HEK293 (cell line): ENCODE measurements at regions of chr17 and their contacts with region 1.

Region 1: GRCh38 chr17:7687908-7688807 is at the start of gene WRAP53:
- H3K4me3 ChIP-seq: peak within 1 kb of the TSS; percentile 93
- H3K27ac ChIP-seq: peak within 1 kb of the TSS; percentile 96
- H3K4me1 ChIP-seq: peaks cover 13% of the 10 kb centered on the region
- CTCF ChIP-seq: peak; percentile 99

Region 2: DNA sequence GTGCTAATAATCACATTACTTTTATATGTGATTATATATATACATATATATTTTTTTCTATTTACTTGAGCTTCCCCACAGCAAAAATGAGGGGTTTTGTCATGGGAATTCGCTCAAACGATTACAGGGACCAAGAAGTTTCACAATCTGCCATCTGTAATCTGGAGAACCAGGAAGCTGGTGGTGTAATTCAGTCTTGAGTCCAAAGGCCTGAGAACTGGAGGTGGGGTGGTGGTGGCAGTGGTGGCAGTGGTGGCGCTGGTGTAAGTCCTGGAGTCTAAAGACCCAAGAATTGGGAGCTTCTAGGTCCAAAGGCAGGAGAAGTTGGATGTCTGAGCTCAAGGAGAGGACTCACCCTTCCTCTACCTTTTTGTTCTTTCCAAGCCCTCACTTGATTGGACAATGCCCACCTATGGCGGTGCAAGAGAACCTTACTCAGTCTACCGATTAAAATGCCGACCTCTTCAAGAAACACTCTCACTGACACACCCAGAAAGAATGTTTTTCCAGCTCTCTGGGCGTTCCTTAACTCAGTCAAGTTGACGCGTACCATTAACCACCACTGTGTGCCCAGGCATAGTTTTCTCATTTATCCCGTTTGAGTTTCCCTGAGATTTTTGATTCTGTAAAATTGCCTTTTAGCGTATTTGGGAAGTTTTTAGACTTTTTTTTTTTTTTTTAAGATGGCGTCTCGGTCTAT is 172.1 kb before region 1 on chr17:
- CTCF ChIA-PET with region 1: interaction called, 12 read pairs
- POLR2A ChIA-PET with region 1: no interaction called
- H3K4me3 ChIP-seq: no peak overlapping the region
- H3K27ac ChIP-seq: no peak overlapping the region
- H3K4me1 ChIP-seq: no peaks in the 10 kb centered on the region
- CTCF ChIP-seq: no peak

Region 3: GRCh38 chr17:7589204-7589868 is 98.8 kb before region 1 on chr17:
- CTCF ChIA-PET with region 1: interaction called, 18 read pairs
- POLR2A ChIA-PET with region 1: interaction called, 93 read pairs
- H3K4me3 ChIP-seq: no peak overlapping the region
- H3K27ac ChIP-seq: no peak overlapping the region
- H3K4me1 ChIP-seq: no peaks in the 10 kb centered on the region; the same call in 1 of the 2 replicates
- CTCF ChIP-seq: no peak; the same call in 1 of the 2 replicates

Region 4: GRCh38 chr17:7640783-7641182 is 47.4 kb before region 1 on chr17:
- CTCF ChIA-PET with region 1: interaction called, 207 read pairs
- POLR2A ChIA-PET with region 1: interaction called, 10 read pairs
- H3K4me3 ChIP-seq: no peak overlapping the region
- H3K27ac ChIP-seq: no peak overlapping the region
- H3K4me1 ChIP-seq: no peaks in the 10 kb centered on the region
- CTCF ChIP-seq: no peak

Region 5: GRCh38 chr17:7673239-7673638 is 14.9 kb before region 1 on chr17:
- CTCF ChIA-PET with region 1: interaction called, 55 read pairs
- POLR2A ChIA-PET with region 1: interaction called, 38 read pairs
- H3K4me3 ChIP-seq: no peak overlapping the region
- H3K27ac ChIP-seq: no peak overlapping the region
- H3K4me1 ChIP-seq: no peaks in the 10 kb centered on the region
- CTCF ChIP-seq: 0 out of 2 replicates have a peak, but pooled peaks have one; percentile 7

Region 6: GRCh38 chr17:7745748-7746470 is 57.8 kb after region 1 on chr17:
- CTCF ChIA-PET with region 1: no interaction called
- POLR2A ChIA-PET with region 1: interaction called, 10 read pairs
- H3K4me3 ChIP-seq: no peak overlapping the region
- H3K27ac ChIP-seq: no peak overlapping the region
- H3K4me1 ChIP-seq: peaks cover 22% of the 10 kb centered on the region
- CTCF ChIP-seq: no peak

Region 7: GRCh38 chr17:8176197-8176940 is 488.2 kb after region 1 on chr17 and contains the start of gene TMEM107:
- CTCF ChIA-PET with region 1: no interaction called
- POLR2A ChIA-PET with region 1: no interaction called
- H3K4me3 ChIP-seq: peak within 1 kb of the TSS; percentile 61
- H3K27ac ChIP-seq: peak within 1 kb of the TSS; percentile 57
- H3K4me1 ChIP-seq: peaks cover 10% of the 10 kb centered on the region
- CTCF ChIP-seq: 0 out of 2 replicates have a peak, but pooled peaks have one; percentile 53